ENCODE measurements at regions of chr15 and their contacts with region 1.

Region 1: GRCh38 chr15:42920519-42921227 is at the start of gene TTBK2:
- DNase-seq: peak; percentile 97 to 100 (median 99)

Region 2: GRCh38 chr15:42575188-42576039 is 345.3 kb before region 1 on chr15 and contains the start of gene STARD9:
- intact Hi-C with region 1: loop called (anchors 10 kb)
- DNase-seq: peak; percentile 95 to 100 (median 98)

Region 3: DNA sequence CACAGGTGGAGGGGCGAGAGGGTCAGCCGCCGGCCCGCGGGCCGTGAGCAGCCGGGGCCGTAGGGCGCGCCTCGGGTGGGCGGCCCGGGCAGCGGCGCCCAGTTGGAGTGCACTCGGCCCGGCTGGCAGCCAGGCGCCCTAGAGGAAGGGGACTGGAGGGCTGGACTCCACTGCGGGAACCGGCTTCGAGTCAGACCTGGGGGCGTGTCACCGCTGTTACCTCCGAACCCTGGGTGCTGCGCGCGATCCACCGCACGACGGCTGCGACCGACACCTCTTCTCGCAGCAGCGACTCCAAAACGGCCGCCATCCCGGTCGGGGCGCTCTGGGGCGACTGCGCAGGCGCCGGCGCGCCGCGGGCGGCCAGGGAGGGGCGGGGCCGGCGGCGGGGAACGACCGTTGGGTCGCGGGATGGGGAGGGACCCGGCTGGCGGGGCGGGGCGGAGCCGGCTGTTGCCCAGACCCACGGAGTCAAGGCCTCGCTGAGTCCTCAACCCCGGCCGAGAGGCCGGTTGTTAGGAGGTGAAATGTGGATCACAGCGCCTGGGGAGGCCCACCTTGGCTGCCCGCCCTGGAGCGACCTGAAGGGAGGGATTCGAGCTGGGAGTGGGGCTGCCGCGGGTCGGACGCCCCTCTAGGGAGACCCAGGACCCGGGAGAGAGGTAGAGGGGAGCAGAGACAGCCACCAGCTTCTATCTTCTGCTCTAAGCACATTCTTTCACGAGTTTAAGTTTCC is 183.7 kb before region 1 on chr15 and contains the start of gene CDAN1:
- intact Hi-C with region 1: loop called (anchors 2 kb)
- DNase-seq: peak; percentile 79 to 98 (median 88)

Measured in posterior cingulate gyrus (tissue), 11 donors.